ENCODE measurements at regions of chr6 and their contacts with region 1.

Region 1: GRCh38 chr6:27893059-27893835 is 18.9 kb downstream of the OR2B2 start:
- DNase-seq: peak; percentile 95
- H3K4me3 Mint-ChIP-seq: no peak overlapping the region
- H3K27ac Mint-ChIP-seq: no peak overlapping the region
- H3K4me1 Mint-ChIP-seq: peaks cover 33% of the 10 kb centered on the region
- H3K27me3 Mint-ChIP-seq: no peaks in the 10 kb centered on the region

Region 2: DNA sequence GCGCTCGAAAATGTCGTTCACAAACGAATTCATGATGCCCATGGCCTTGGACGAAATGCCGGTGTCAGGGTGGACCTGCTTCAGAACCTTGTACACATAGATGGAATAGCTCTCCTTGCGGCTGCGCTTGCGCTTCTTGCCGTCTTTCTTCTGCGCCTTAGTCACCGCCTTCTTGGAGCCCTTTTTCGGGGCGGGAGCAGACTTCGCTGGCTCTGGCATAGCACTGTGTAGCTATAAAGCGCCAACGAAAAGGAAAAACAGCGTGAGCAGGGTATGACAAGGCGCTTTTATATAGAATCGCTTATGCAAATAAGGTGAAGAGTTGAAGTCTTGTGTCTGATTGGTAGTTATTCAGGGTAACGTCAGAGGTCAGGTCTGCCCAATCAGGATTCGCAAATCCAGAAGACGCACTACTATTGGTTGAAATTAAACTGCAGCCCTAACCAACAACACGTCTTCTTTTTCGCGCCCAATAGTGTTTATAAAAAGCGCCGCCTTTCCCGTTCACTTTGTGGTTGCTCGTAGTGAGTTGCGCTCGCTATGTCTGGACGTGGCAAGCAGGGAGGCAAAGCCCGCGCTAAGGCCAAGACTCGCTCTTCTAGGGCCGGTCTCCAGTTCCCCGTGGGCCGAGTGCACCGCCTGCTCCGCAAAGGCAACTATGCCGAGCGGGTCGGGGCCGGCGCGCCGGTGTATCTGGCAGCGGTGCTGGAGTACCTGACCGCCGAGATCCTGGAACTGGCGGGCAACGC is 760.5 kb before region 1 on chr6:
- CTCF ChIA-PET with region 1: interaction called, 10 read pairs
- POLR2A ChIA-PET with region 1: interaction called, 32 read pairs
- DNase-seq: peak; percentile 94
- H3K4me3 Mint-ChIP-seq: no peak overlapping the region
- H3K27ac Mint-ChIP-seq: no peak overlapping the region
- H3K4me1 Mint-ChIP-seq: peaks cover 66% of the 10 kb centered on the region
- H3K27me3 Mint-ChIP-seq: no peaks in the 10 kb centered on the region

Region 3: GRCh38 chr6:27394073-27394472 is 499.2 kb before region 1 on chr6:
- CTCF ChIA-PET with region 1: no interaction called
- POLR2A ChIA-PET with region 1: interaction called, 10 read pairs
- DNase-seq: no peak
- H3K4me3 Mint-ChIP-seq: no peak overlapping the region
- H3K27ac Mint-ChIP-seq: no peak overlapping the region
- H3K4me1 Mint-ChIP-seq: peaks cover 8% of the 10 kb centered on the region
- H3K27me3 Mint-ChIP-seq: no peaks in the 10 kb centered on the region

Region 4: GRCh38 chr6:27687154-27688013 is 205.9 kb before region 1 on chr6:
- CTCF ChIA-PET with region 1: no interaction called
- POLR2A ChIA-PET with region 1: no interaction called
- DNase-seq: peak; percentile 72
- H3K4me3 Mint-ChIP-seq: peak overlapping the region; percentile 78
- H3K27ac Mint-ChIP-seq: peak overlapping the region; percentile 84
- H3K4me1 Mint-ChIP-seq: peaks cover 19% of the 10 kb centered on the region
- H3K27me3 Mint-ChIP-seq: peaks cover 16% of the 10 kb centered on the region

Region 5: GRCh38 chr6:27795697-27796494 is 97.4 kb before region 1 on chr6:
- CTCF ChIA-PET with region 1: interaction called, 14 read pairs
- POLR2A ChIA-PET with region 1: interaction called, 6 read pairs
- DNase-seq: peak; percentile 82
- H3K4me3 Mint-ChIP-seq: no peak overlapping the region
- H3K27ac Mint-ChIP-seq: no peak overlapping the region
- H3K4me1 Mint-ChIP-seq: peaks cover 47% of the 10 kb centered on the region
- H3K27me3 Mint-ChIP-seq: peaks cover 18% of the 10 kb centered on the region

Region 6: DNA sequence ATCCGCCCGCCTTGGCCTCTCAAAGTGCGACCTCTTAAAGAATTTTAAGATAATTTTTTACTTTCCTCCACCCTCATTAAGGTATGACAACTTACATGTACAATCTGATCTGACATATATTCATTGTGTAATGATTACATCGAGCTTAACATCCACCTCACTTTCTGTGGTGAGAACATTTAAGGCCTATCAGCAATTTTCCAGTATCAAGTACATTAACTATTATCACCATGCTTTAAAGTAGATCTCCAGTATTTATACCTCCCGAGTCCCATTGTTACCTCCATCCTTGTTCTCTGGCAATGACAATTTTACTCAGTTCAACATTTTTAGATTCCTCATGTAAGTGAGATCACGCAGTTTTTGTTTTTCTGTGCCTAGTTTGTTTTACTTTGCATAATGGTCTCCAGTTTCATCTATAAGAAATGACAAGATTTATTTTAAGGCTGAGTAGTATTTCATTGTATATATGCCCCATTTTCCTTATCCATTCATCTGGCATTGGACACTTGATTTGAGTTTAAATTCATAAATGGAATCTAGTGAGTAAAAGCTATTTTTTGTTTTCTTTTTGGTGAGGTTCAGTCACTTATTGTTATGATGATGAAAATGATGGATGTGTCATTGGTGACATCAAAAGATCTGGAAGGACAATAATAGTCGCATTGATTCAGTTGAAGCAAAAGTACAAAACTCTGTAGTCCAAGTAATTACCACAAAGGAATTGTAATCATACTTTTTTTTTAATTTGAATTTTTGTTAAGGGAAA is 68.0 kb before region 1 on chr6:
- CTCF ChIA-PET with region 1: interaction called, 25 read pairs
- POLR2A ChIA-PET with region 1: interaction called, 61 read pairs
- DNase-seq: no peak
- H3K4me3 Mint-ChIP-seq: peak overlapping the region; percentile 89
- H3K27ac Mint-ChIP-seq: peak overlapping the region; percentile 99
- H3K4me1 Mint-ChIP-seq: peaks cover 48% of the 10 kb centered on the region
- H3K27me3 Mint-ChIP-seq: no peaks in the 10 kb centered on the region

Region 7: DNA sequence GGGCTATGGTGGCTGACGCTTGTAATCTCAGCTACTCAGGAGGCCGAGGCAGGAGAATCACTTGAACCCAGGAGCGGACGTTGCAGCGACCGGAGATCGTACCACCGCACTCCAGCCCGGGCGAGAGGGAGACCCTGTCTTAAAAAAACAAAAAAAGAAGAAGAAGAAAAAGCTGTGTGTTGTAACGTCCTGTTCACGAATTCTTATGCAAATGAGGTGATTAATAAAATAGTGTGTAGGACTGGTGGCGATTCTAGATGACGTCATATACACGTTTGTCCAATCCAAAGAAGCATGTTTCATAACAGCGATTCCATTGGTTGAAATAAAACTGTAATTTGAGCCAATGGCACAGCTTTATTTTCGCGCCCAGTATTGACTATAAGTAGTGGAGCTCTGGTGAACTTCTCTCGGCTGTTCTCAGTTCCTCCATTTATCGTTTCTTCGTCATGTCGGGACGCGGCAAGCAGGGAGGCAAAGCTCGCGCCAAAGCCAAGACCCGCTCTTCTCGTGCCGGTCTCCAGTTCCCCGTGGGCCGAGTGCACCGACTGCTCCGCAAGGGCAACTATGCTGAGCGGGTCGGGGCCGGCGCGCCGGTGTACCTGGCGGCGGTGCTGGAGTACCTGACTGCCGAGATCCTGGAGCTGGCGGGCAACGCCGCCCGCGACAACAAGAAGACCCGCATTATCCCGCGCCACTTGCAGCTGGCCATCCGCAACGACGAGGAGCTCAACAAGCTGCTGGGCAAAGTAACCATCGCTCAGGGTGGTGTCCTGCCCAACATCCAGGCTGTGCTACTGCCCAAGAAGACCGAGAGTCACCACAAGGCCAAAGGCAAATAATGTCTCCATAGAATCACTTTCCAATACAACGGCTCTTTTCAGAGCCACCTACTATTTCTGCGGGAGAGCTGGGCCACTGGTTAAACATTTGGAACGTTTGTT is 28.1 kb before region 1 on chr6:
- CTCF ChIA-PET with region 1: interaction called, 47 read pairs
- POLR2A ChIA-PET with region 1: interaction called, 593 read pairs
- DNase-seq: peak; percentile 88
- H3K4me3 Mint-ChIP-seq: peak overlapping the region; percentile 99
- H3K27ac Mint-ChIP-seq: peak overlapping the region; percentile 100
- H3K4me1 Mint-ChIP-seq: peaks cover 65% of the 10 kb centered on the region
- H3K27me3 Mint-ChIP-seq: no peaks in the 10 kb centered on the region

Region 8: DNA sequence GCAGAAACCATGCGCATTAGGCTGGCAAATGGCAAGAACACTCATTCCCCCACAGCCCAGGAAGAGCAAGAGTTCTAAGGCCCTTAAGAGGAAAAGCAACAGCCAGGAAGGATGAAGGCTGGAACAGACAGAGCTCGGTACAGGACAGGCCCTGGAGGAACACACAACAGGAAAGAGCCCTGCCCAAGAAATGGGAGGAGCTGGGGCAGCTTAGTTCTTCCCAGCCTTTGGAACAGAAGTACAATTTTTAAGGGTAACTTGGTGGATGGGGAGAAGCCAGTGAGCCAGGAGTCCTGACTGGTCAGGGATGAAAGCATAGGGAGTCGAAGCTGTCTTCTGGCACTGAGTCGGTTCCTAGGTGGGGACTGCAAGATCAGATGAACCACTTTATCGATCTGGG is 13.4 kb before region 1 on chr6:
- CTCF ChIA-PET with region 1: interaction called, 43 read pairs
- POLR2A ChIA-PET with region 1: interaction called, 593 read pairs
- DNase-seq: no peak
- H3K4me3 Mint-ChIP-seq: no peak overlapping the region
- H3K27ac Mint-ChIP-seq: peak overlapping the region; percentile 57
- H3K4me1 Mint-ChIP-seq: peaks cover 15% of the 10 kb centered on the region
- H3K27me3 Mint-ChIP-seq: no peaks in the 10 kb centered on the region